Ovary (tissue), 10 donors: ENCODE measurements at regions of chr15 and their contacts with region 1.

Region 1: DNA sequence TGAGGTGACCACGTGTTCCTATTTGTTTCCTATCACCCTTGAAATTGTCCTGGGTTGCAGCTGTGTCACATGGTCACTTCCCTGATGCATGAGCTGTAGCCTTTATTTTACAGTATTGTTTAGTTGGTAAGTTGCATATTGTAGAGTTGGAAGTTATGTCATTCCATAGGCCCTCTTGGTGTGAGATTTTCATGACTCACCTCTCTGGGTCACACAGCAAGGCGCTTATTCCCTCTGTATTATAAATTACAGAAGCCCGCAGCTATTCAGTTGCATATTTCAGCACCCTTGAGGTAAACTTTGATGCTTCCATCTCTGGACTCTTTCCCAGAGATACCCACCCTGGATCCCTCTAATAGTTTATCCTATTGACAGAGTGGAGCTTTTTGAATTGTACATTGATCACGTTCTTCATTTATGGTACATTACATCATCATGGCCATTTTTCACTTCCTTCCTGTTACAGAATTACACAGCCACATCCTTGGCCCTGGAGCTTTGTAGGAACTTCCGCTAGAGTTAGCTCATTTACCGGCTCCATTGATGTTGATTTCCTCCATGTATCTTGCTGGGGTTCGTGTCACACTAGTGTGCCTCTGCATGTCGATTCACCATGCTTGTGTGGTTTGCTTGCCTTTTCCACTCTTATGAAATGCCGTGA is 543.1 kb upstream of the RGMA start:
- DNase-seq: no peak
- H3K4me3 ChIP-seq: no peak overlapping the region
- H3K27ac ChIP-seq: no peak overlapping the region
- H3K4me1 ChIP-seq: no peaks in the 10 kb centered on the region
- H3K27me3 ChIP-seq: no peaks in the 10 kb centered on the region
- CTCF ChIP-seq: no peak
- EP300 ChIP-seq: no peak
- POLR2A ChIP-seq: no peak

Region 2: DNA sequence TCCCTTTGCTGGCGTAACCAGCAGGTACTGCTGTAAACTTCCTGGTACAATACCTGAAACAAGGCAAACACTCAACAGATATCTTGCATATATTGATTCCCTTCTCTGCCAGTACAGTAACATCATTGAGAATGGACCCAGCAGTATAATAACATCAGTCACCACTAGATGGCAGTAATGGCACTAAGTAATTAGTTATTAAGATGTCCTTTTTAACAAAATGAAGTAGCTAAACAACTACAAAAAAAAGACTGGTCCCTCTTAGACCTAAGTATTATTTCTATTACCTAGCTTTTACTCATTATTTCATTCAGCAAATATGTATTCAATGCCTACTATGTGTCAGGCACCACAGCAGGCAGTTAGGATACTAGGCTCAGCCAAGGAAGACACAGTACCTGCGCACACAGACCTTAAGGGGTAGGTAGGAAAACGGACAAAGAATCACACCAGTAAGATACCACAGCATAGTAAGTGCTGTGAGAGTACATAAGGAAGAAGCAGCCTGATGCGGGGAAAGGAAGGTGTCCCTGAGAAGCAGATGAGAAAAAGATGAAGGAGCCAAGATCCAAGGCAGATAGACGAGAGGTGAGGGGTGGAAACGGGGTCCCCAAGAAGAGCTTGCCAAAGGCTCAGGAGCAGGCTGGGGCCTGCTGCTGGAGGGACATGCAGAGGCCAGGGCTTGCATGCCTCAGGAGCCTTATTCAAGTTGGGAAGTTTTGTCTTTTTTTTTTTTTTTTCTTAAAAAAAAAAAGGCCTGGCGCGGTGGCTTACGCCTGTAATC is 834.7 kb before region 1 on chr15:
- intact Hi-C with region 1: loop called in 1 of 4 experiments (anchors 5 kb)
- DNase-seq: peak in 1 of 5 donors; percentile 37
- H3K4me3 ChIP-seq: no peak overlapping the region
- H3K27ac ChIP-seq: peak overlapping the region in 1 of 2 donors; percentile 39
- H3K4me1 ChIP-seq: peaks cover 6% of the 10 kb centered on the region
- H3K27me3 ChIP-seq: no peaks in the 10 kb centered on the region
- CTCF ChIP-seq: peak; percentile 67 to 83 (median 81)
- EP300 ChIP-seq: no peak
- POLR2A ChIP-seq: no peak

Region 3: DNA sequence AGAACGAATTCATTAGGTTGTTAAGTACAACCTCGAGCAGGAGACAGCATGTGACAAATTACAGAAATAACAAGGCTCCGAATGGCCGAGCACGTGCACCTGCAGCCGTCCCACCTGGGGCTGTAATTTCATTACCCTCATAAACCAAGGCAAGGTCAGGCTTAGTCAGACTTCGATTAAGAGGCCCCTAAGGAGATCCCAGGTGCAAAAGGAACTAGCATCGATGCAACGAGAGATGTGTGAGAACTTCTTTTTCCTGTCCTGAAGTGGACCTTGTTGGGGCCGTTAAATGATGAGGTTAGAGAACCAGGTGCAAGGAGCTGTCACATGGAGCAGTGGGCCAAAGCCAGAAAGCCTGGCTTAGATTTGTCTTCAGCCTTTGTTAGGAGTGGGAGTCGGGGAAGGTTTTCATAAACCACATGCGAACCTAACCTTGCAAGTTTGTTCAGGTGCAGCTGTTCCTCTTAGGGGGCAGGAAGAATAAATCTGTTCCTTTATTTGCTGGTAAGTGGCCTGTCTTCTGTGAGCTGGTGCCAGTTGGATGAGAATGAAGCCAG is 39.4 kb after region 1 on chr15:
- intact Hi-C with region 1: no loop called
- DNase-seq: no peak
- H3K4me3 ChIP-seq: no peak overlapping the region
- H3K27ac ChIP-seq: no peak overlapping the region
- H3K4me1 ChIP-seq: no peaks in the 10 kb centered on the region
- H3K27me3 ChIP-seq: no peaks in the 10 kb centered on the region
- CTCF ChIP-seq: no peak
- EP300 ChIP-seq: no peak
- POLR2A ChIP-seq: no peak